ENCODE measurements at regions of chr4 and their contacts with region 1.

Region 1: GRCh38 chr4:139295206-139295941 is 5.9 kb upstream of the NAA15 start:
- DNase-seq: peak; percentile 64
- ATAC-seq: peak; percentile 98
- H3K4me3 ChIP-seq: peak overlapping the region; percentile 71 to 90
- H3K27ac ChIP-seq: peak overlapping the region; percentile 90
- H3K4me1 ChIP-seq: peaks cover 11% of the 10 kb centered on the region; the same call in 1 of the 2 replicates
- H3K27me3 ChIP-seq: no peaks in the 10 kb centered on the region
- CTCF ChIP-seq: peak; percentile 91

Region 2: GRCh38 chr4:139229534-139230039 is 65.8 kb before region 1 on chr4:
- CTCF ChIA-PET with region 1: interaction called, 3 read pairs
- POLR2A ChIA-PET with region 1: no interaction called
- in situ Hi-C with region 1: no loop called
- intact Hi-C with region 1: loop called (anchors 1 kb)
- DNase-seq: no peak
- ATAC-seq: peak; percentile 82
- H3K4me3 ChIP-seq: no peak overlapping the region
- H3K27ac ChIP-seq: no peak overlapping the region
- H3K4me1 ChIP-seq: no peaks in the 10 kb centered on the region
- H3K27me3 ChIP-seq: no peaks in the 10 kb centered on the region
- CTCF ChIP-seq: peak; percentile 70; the same call in 1 of the 2 replicates

Measured in Panc1 (cell line).